A549 (cell line): ENCODE measurements at regions of chr11 and their contacts with region 1.

Region 1: GRCh38 chr11:75248690-75249268 is 8.2 kb downstream of the TPBGL start:
- DNase-seq: peak; percentile 87 to 90
- ATAC-seq: peak; percentile 79 to 92
- H3K4me3 ChIP-seq: no peak overlapping the region
- H3K27ac ChIP-seq: no peak overlapping the region
- H3K4me1 ChIP-seq: no peaks in the 10 kb centered on the region
- CTCF ChIP-seq: peak; percentile 100
- EP300 ChIP-seq: no peak
- POLR2A ChIP-seq: no peak
- RAD21 ChIP-seq: peak; percentile 98 to 99

Region 2: DNA sequence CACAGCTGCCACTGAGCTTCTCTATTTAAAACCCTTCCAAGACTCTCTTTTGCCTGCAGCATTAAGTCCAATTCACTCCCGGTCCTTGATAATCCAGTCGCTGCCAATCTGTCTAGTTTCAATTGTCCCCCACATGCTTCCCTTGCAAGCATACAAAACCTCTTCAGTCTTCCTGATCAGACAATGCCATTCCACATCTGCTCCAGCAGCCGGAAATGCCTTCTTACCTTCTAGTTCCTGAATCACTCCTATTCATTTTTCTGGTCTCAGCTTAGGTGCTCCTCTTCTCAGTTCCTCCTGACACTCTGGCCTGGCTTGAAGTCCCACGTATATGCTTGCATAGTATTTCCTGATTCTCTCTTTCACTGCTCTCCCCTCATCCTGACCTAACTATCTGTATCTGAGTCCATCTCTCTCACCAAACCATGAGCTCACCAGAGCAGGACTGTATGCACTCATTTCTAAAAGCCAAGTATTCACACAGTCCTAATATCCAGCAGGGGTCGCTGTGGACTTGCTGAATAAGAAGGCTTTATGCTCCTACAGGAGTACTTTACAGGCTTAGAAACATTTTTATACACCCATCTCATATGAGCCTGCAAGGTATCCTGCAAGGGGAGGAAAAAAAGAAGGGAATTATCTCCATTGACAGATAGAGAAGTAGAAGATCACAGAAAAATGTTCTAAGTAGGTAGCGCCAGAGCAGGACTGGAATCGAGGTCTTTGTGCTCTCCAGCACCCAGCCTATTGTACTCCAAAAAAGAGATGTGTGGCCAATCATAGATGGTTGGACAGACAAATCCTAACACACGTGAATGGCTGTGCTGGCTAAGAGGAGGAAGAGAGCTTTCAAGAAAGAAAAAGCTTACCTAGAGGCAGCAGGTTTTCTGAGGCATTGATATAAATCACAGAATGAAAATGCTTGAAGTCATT is 319.1 kb before region 1 on chr11:
- CTCF ChIA-PET with region 1: interaction called, 160 read pairs
- POLR2A ChIA-PET with region 1: no interaction called
- DNase-seq: peak; percentile 60 to 91
- ATAC-seq: peak; percentile 97 to 99
- H3K4me3 ChIP-seq: no peak overlapping the region
- H3K27ac ChIP-seq: no peak overlapping the region
- H3K4me1 ChIP-seq: peaks cover 9% of the 10 kb centered on the region; the same call in 2 of the 3 replicates
- CTCF ChIP-seq: peak; percentile 92
- EP300 ChIP-seq: no peak
- POLR2A ChIP-seq: no peak
- RAD21 ChIP-seq: peak; percentile 81 to 90

Region 3: GRCh38 chr11:75031771-75032549 is 216.8 kb before region 1 on chr11:
- CTCF ChIA-PET with region 1: interaction called, 355 read pairs
- POLR2A ChIA-PET with region 1: no interaction called
- DNase-seq: peak; percentile 71
- ATAC-seq: peak; percentile 85 to 95
- H3K4me3 ChIP-seq: no peak overlapping the region
- H3K27ac ChIP-seq: peak overlapping the region in 1 of 2 experiments; percentile 63; a peak in 3 of 6 replicates
- H3K4me1 ChIP-seq: peaks cover 9% of the 10 kb centered on the region; the same call in 1 of the 3 replicates
- CTCF ChIP-seq: peak; percentile 67
- EP300 ChIP-seq: no peak
- POLR2A ChIP-seq: no peak
- RAD21 ChIP-seq: peak; percentile 53 to 66

Region 4: DNA sequence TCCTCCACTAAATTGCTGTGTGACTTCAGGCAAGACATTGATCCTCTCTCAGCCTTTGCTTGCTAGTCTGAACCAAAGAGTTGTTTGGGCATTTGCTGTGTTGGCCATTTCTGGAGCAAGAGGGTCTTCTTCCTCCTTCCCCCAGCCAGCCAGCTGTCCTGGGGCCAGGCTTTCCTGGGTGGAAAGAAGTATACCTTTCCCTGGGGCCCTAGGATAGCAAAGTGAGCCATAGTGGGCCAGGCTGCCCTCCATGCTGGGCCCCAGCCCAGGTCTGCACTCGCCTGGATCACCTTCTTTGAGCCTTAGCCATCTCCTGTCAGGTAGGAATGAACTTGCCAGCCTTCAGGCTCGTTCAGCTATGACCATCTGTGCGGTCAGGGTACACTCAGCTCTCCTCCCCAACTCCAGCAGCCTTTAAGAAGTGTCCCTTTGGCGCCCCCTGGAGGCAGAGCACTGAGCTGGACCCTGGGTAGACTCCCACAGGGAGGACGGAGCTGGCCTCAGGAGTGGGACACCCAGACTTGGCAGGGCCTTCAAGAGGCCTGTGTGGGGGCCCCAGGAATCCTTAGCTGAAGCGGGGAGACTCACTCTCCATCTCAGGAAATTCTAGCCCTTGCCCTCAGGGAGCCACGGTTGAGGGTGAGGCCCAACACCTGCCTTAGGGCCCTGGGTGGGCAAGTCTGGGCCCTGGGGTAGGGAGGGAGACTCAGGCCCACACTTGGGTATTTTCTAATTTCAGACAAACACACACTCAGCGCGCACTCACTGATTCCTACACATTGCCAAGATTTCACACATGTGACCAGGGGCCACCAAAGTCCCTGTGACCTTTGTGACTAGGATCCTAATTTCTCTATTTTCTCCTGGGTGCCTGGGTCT is 43.9 kb before region 1 on chr11:
- CTCF ChIA-PET with region 1: interaction called, 48 read pairs
- POLR2A ChIA-PET with region 1: interaction called, 3 read pairs
- DNase-seq: peak; percentile 75 to 84
- ATAC-seq: peak; percentile 85 to 99
- H3K4me3 ChIP-seq: no peak overlapping the region
- H3K27ac ChIP-seq: no peak overlapping the region
- H3K4me1 ChIP-seq: no peaks in the 10 kb centered on the region
- CTCF ChIP-seq: peak; percentile 85
- EP300 ChIP-seq: no peak
- POLR2A ChIP-seq: no peak
- RAD21 ChIP-seq: peak; percentile 90 to 91

Region 5: GRCh38 chr11:75233742-75234172 is 15.0 kb before region 1 on chr11:
- CTCF ChIA-PET with region 1: interaction called, 62 read pairs
- POLR2A ChIA-PET with region 1: no interaction called
- DNase-seq: peak in 1 of 2 experiments; percentile 46
- ATAC-seq: peak; percentile 30 to 46; a peak in 1 of 6 replicates
- H3K4me3 ChIP-seq: no peak overlapping the region
- H3K27ac ChIP-seq: no peak overlapping the region
- H3K4me1 ChIP-seq: no peaks in the 10 kb centered on the region
- CTCF ChIP-seq: no peak
- EP300 ChIP-seq: no peak
- POLR2A ChIP-seq: no peak
- RAD21 ChIP-seq: no peak

Region 6: DNA sequence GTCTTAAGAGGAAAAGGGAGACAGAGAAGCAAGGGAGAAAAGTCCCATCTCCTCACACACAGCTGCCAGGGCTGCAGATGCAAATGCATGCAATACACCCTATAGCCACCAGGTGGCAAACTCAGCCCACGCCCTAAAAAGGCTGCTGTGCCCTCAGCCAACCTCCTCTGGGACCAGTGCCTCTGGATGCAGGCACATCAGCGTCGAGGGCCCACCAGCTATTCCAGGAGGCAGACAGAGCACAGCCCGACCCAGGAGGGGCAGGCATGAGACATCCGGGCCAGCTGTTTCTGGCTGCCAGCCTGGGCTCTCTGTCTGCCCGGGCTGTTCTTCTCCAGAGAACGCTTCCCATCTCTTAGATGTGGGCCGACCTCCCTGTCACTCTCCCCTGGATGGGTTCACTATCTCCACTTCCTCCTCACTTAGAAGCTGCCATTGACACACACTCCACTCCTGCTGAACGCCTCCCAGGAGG is 31.5 kb after region 1 on chr11:
- CTCF ChIA-PET with region 1: interaction called, 13 read pairs
- POLR2A ChIA-PET with region 1: no interaction called
- DNase-seq: peak; percentile 79 to 93
- ATAC-seq: peak; percentile 85 to 97
- H3K4me3 ChIP-seq: no peak overlapping the region
- H3K27ac ChIP-seq: peak overlapping the region in 1 of 2 experiments; percentile 28; a peak in 1 of 6 replicates
- H3K4me1 ChIP-seq: peaks cover 10% of the 10 kb centered on the region
- CTCF ChIP-seq: peak; percentile 90
- EP300 ChIP-seq: no peak
- POLR2A ChIP-seq: no peak
- RAD21 ChIP-seq: peak; percentile 96 to 99